ENCODE measurements at regions of chr9 and their contacts with region 1.

Region 1: GRCh38 chr9:130107234-130107861 is 53.6 kb downstream of the GPR107 start:
- DNase-seq: peak; percentile 69 to 75
- H3K4me3 ChIP-seq: no peak overlapping the region
- H3K4me3 Mint-ChIP-seq: no peak overlapping the region
- H3K27ac Mint-ChIP-seq: no peak overlapping the region
- H3K4me1 ChIP-seq: no peaks in the 10 kb centered on the region
- H3K4me1 Mint-ChIP-seq: no peaks in the 10 kb centered on the region
- H3K27me3 ChIP-seq: no peaks in the 10 kb centered on the region
- H3K27me3 Mint-ChIP-seq: no peaks in the 10 kb centered on the region
- CTCF ChIP-seq: peak; percentile 78 to 85

Region 2: GRCh38 chr9:130023144-130023787 is 84.1 kb before region 1 on chr9:
- CTCF ChIA-PET with region 1: no interaction called
- POLR2A ChIA-PET with region 1: no interaction called
- intact Hi-C with region 1: no loop called
- DNase-seq: no peak
- H3K4me3 ChIP-seq: no peak overlapping the region
- H3K4me3 Mint-ChIP-seq: no peak overlapping the region
- H3K27ac Mint-ChIP-seq: peak overlapping the region; percentile 7
- H3K4me1 ChIP-seq: peaks cover 12% of the 10 kb centered on the region
- H3K4me1 Mint-ChIP-seq: peaks cover 7% of the 10 kb centered on the region
- H3K27me3 ChIP-seq: no peaks in the 10 kb centered on the region
- H3K27me3 Mint-ChIP-seq: no peaks in the 10 kb centered on the region
- CTCF ChIP-seq: no peak

Region 3: DNA sequence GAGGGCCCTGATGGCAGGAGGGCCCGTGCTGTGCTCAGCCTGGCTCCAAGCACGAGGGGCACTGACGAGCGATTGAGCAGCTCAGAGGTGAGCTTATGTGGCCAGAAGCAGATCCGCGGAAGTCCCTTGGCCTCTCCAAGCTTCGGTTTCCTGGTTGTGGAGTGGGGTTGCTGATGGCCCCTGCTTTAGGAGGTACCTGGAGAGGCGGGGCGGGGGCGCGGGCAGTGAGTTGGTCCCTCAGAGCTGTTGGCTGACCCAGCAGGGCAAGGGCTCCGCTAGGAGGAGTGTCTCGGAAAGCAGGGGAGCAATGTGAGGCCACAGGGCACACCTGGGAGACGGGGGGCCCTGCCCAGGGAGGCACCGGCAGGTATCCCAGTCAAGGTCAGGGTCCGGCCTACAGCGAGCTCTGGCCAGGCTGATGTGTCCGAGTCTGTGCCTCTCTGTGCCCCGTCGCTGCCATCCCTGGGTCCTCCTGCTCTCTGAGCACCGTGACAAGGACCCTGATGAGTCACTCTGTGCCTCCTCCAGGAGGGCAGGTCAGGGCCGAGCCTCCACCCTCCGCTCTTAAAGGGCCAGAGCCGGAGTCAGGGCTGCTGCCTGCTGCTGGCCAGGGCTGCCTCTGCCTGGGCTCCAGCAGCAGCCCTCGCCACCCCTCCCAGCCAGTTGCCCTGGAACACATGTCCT is 79.6 kb after region 1 on chr9:
- CTCF ChIA-PET with region 1: no interaction called
- POLR2A ChIA-PET with region 1: no interaction called
- intact Hi-C with region 1: loop called (anchors 5 kb)
- DNase-seq: peak; percentile 68 to 73
- H3K4me3 ChIP-seq: peak overlapping the region; percentile 30
- H3K4me3 Mint-ChIP-seq: peak overlapping the region; percentile 28
- H3K27ac Mint-ChIP-seq: peak overlapping the region; percentile 44
- H3K4me1 ChIP-seq: peaks cover 23% of the 10 kb centered on the region
- H3K4me1 Mint-ChIP-seq: peaks cover 20% of the 10 kb centered on the region
- H3K27me3 ChIP-seq: no peaks in the 10 kb centered on the region
- H3K27me3 Mint-ChIP-seq: no peaks in the 10 kb centered on the region
- CTCF ChIP-seq: no peak

Region 4: DNA sequence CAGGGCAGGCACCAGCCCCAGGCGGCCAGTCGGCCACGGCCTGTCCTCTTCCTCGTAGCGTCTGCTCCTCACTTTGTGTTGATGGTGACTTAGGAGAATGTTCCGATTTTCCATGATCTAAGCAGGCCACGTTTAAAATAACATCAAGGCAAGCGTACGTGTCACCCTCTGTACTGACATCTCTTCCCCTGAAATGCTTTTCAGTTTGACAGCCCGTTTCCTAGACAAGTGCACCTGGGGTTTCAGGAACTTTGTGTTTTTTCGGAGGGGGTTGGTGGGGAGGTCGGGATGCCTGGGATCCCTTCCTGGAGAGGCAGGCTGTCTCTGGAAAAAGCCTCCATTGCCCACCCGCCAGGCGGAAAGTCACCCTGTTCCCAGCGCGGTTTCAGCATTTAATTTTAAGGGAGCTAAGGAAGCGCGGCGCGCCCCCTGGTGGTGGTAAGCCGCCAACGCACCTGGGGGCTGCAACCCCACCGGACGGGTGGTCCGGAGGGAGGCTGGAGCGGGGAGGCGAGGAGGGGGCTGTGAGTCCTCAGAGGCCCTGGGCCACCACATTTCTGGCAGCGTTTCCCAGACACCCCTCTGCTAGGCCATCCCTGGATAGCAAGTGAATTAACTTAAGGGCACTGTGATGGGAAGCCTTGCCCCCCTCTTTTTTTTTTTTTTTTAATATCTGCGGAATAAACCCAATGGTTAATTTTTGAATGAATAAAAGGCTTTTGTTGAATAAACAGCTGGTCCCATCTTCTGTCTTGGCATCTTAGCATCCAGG is 128.7 kb after region 1 on chr9:
- CTCF ChIA-PET with region 1: interaction called, 9 read pairs
- POLR2A ChIA-PET with region 1: no interaction called
- intact Hi-C with region 1: loop called (anchors 1 kb)
- DNase-seq: peak; percentile 53 to 73
- H3K4me3 ChIP-seq: no peak overlapping the region
- H3K4me3 Mint-ChIP-seq: no peak overlapping the region
- H3K27ac Mint-ChIP-seq: no peak overlapping the region
- H3K4me1 ChIP-seq: no peaks in the 10 kb centered on the region; the same call in 1 of the 2 replicates
- H3K4me1 Mint-ChIP-seq: no peaks in the 10 kb centered on the region
- H3K27me3 ChIP-seq: no peaks in the 10 kb centered on the region
- H3K27me3 Mint-ChIP-seq: no peaks in the 10 kb centered on the region
- CTCF ChIP-seq: peak; percentile 98 to 99

Region 5: GRCh38 chr9:130343445-130343918 is 236.1 kb after region 1 on chr9:
- CTCF ChIA-PET with region 1: no interaction called
- POLR2A ChIA-PET with region 1: no interaction called
- intact Hi-C with region 1: loop called (anchors 1 kb)
- DNase-seq: peak in 1 of 2 experiments; percentile 58
- H3K4me3 ChIP-seq: no peak overlapping the region
- H3K4me3 Mint-ChIP-seq: no peak overlapping the region
- H3K27ac Mint-ChIP-seq: no peak overlapping the region
- H3K4me1 ChIP-seq: no peaks in the 10 kb centered on the region
- H3K4me1 Mint-ChIP-seq: no peaks in the 10 kb centered on the region
- H3K27me3 ChIP-seq: no peaks in the 10 kb centered on the region
- H3K27me3 Mint-ChIP-seq: no peaks in the 10 kb centered on the region
- CTCF ChIP-seq: peak; percentile 74 to 86

Region 6: DNA sequence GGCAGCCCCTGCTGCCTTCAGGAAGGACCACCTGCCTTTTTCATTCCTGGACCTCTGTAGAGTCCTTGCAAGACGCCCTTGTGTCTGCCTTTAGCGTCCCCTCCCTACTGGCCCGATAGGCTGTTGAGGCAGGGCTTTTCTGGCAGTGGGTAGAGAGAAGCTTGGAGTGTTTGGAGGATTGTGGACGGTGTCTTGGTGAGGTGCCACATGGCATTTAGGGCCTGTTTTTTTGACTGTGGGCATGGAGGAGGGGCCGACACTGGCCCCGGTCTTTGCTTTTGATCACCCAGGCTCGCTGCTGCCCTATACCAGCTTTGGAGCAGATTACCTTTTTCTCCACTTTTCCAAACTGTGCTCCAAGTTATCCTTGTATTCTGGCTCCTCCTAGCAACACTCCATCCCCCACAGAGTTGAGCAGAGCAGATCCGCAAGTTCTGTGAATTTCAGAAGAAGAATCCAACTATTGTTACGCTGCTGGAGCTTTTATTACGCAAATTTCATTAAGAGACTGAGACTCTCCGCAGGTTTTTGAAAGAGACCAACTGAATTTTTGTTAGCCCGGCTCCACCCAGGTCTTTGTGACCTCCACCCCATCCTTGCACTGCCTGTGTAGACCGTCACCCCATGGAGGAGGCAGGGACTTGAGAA is 522.2 kb after region 1 on chr9:
- CTCF ChIA-PET with region 1: no interaction called
- POLR2A ChIA-PET with region 1: no interaction called
- intact Hi-C with region 1: no loop called
- DNase-seq: no peak
- H3K4me3 ChIP-seq: no peak overlapping the region
- H3K4me3 Mint-ChIP-seq: no peak overlapping the region
- H3K27ac Mint-ChIP-seq: no peak overlapping the region
- H3K4me1 ChIP-seq: no peaks in the 10 kb centered on the region
- H3K4me1 Mint-ChIP-seq: no peaks in the 10 kb centered on the region
- H3K27me3 ChIP-seq: no peaks in the 10 kb centered on the region
- H3K27me3 Mint-ChIP-seq: no peaks in the 10 kb centered on the region
- CTCF ChIP-seq: no peak